ENCODE measurements at regions of chr9 and their contacts with region 1.

Region 1: GRCh38 chr9:77488439-77489126 is 159.5 kb downstream of the GNA14 start:
- DNase-seq: no peak
- H3K4me3 ChIP-seq: no peak overlapping the region
- CTCF ChIP-seq: peak; percentile 55

Region 2: DNA sequence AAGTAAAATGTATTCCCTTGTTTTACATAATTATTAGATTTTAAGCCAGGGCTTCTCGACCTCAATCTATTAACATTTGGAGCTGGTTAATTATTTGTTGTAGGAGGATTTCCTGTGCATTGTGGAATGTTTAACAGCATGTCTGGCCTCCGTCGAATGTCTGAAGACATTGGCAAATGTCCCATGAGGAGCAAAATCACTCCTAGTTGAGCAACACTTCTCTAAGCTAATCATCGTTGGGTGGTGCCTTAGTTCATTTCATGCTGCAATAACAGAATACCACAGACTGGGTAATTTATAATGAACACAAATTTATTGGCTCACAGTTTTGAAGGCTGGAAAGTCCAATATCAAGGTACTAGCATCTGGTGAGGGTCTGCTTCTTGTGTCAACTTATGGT is 324.7 kb before region 1 on chr9:
- CTCF ChIA-PET with region 1: interaction called, 14 read pairs
- POLR2A ChIA-PET with region 1: no interaction called
- DNase-seq: peak; percentile 62
- H3K4me3 ChIP-seq: no peak overlapping the region
- CTCF ChIP-seq: no peak

Region 3: GRCh38 chr9:77291714-77292113 is 196.9 kb before region 1 on chr9:
- CTCF ChIA-PET with region 1: interaction called, 14 read pairs
- POLR2A ChIA-PET with region 1: no interaction called
- DNase-seq: no peak
- H3K4me3 ChIP-seq: no peak overlapping the region
- CTCF ChIP-seq: peak; percentile 55

Region 4: DNA sequence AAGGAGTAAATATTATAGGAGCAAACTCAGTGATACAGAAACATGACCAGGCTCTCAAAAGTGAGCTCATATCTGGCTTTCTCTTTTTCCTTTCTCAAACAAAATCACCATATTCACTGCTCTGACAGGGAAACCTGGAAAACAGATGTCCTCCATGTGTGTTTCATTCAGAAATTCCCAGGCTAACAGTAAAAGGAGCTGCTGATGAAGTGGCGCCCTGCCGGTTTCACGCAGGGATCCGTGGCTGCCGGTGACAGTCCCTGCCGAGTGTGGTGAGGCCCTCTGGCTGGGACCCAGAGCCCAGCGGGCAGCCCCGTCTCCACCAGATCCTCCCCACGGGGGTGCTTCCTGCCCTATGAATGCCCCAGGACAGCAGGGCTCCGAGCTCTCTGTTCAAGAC is 48.5 kb before region 1 on chr9:
- CTCF ChIA-PET with region 1: interaction called, 106 read pairs
- POLR2A ChIA-PET with region 1: no interaction called
- DNase-seq: no peak
- H3K4me3 ChIP-seq: peak overlapping the region; percentile 19; the same call in 1 of the 2 replicates
- CTCF ChIP-seq: no peak

Region 5: GRCh38 chr9:77475641-77476473 is 12.7 kb before region 1 on chr9:
- CTCF ChIA-PET with region 1: interaction called, 28 read pairs
- POLR2A ChIA-PET with region 1: no interaction called
- DNase-seq: peak; percentile 64
- H3K4me3 ChIP-seq: no peak overlapping the region
- CTCF ChIP-seq: no peak

Region 6: DNA sequence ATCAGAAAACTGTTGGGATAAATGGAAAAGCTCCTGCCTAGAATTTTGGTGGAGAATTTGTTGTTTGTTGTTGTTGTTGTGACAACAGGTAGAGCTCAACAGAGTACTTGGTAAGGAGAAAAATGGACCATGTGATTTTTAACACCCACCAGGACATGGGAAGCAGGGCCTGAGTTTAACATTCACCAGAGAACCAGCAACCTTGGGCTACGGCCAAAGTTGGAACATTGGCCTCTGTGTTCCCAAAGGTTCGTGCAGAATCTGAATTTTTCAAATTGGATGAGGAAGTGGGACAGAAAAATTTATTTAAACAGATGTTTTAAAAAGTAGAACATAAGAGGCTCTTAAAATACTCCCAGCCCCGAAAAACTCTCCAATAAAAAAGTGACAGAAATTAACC is 32.5 kb after region 1 on chr9:
- CTCF ChIA-PET with region 1: no interaction called
- POLR2A ChIA-PET with region 1: no interaction called
- DNase-seq: no peak
- H3K4me3 ChIP-seq: no peak overlapping the region
- CTCF ChIP-seq: no peak

Region 7: DNA sequence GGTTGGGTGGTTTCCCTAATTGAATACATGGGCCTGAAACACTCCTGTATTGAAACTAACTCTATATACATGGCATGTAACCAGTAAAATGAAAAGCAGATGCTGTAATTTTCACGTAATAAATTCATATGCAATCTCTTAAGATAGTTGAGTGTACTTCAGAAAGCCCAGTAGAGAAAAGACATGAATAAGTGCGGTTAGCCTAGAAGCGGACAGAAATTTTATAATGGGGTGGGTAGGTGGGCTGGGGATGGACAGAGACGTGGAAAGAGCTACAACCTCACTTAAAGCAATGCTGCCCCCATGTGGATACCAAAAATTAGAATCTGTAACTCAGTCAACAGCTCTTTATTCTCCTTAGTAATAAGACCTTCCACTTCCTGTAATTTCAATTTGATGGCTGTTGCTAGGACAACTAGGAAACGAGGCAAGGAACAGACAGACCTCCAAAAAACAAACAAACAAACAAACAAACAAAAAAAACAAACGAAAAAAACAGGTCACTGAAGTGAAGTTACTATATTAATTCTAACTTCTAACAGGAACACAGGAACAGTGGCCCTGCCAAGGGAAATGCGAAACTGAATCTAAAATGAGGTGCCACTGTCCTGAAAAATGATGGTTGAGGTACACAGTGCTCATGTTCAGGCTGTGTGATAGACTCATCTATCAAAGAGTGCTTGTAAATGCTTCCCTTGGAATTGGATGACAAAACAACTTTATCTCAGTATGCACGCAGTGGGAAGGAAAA is 262.9 kb after region 1 on chr9:
- CTCF ChIA-PET with region 1: interaction called, 13 read pairs
- POLR2A ChIA-PET with region 1: no interaction called
- DNase-seq: peak; percentile 56
- H3K4me3 ChIP-seq: no peak overlapping the region
- CTCF ChIP-seq: peak; percentile 47

Measured in AG04449 (cell line).